Naive thymus-derived CD4-positive, alpha-beta T cell (primary cell): ENCODE measurements at regions of chr16 and their contacts with region 1.

Region 1: DNA sequence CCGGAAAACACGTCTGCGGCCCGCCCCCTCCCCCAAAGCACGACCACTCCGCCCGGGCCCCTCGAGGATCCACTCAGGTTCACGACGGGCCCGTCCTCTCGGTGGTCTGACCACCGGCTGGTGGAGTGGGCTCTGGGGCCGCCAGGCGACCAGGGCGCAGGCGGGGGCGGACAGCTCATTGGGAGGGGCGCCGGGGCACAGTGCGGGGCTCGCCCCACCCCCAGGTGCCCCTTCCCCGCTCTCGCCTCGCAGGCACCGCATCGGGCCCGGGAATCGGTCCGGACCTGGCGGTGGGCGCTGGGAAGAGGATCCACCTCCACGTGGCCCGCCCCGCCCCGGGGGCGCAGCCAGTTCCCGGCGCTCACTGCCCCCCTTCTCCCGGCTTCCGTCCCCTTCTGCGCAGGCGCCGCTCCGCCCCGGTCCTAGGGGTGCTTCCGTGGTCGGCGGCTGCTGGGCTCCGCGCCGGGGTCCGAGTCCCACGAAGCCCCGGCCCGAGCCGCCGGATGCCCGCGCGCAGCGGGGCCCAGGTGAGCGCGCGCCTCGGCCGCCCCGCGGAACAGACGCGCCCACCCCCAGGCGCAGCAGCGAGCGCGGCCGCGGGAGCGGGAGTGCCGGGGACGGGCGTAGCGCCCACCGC is at the start of gene MPG:
- DNase-seq: peak; percentile 67 to 94 (median 77)
- ATAC-seq: peak; percentile 89
- H3K4me3 ChIP-seq: peak within 1 kb of the TSS; percentile 84
- H3K4me3 Mint-ChIP-seq: peak within 1 kb of the TSS; percentile 84 to 93 (median 90)
- H3K27ac ChIP-seq: peak within 1 kb of the TSS; percentile 71
- H3K27ac Mint-ChIP-seq: peak within 1 kb of the TSS; percentile 62 to 89 (median 84)
- H3K4me1 ChIP-seq: peaks cover 14 to 15% of the 10 kb centered on the region in 2 donors
- H3K4me1 Mint-ChIP-seq: peaks cover 11 to 42% (median 30%) of the 10 kb centered on the region in 7 donors
- H3K27me3 ChIP-seq: no peaks in the 10 kb centered on the region
- H3K27me3 Mint-ChIP-seq: peaks cover 8 to 21% (median 11%) of the 10 kb centered on the region in 5 donors
- total RNA-seq, gene MPG: 17.5 to 59.5 (median 25.4) TPM

Region 2: GRCh38 chr16:53346-54236 is 24.3 kb before region 1 on chr16 and contains the starts of genes POLR3K and SNRNP25:
- CTCF ChIA-PET with region 1: no interaction called
- POLR2A ChIA-PET with region 1: no interaction called
- intact Hi-C with region 1: loop called (anchors 1 kb)
- DNase-seq: peak; percentile 90 to 98 (median 96)
- ATAC-seq: peak; percentile 98
- H3K4me3 ChIP-seq: peak within 1 kb of the TSS; percentile 96
- H3K4me3 Mint-ChIP-seq: peak within 1 kb of the TSS; percentile 89 to 100 (median 98)
- H3K27ac ChIP-seq: peak within 1 kb of the TSS; percentile 73
- H3K27ac Mint-ChIP-seq: peak within 1 kb of the TSS; percentile 66 to 95 (median 92)
- H3K4me1 ChIP-seq: peaks cover 9 to 11% of the 10 kb centered on the region in 2 donors
- H3K4me1 Mint-ChIP-seq: peaks cover 22 to 45% (median 36%) of the 10 kb centered on the region in 7 donors
- H3K27me3 ChIP-seq: no peaks in the 10 kb centered on the region
- H3K27me3 Mint-ChIP-seq: no peaks in the 10 kb centered on the region
- total RNA-seq, gene POLR3K: 8.5 to 45.4 (median 18.9) TPM
- total RNA-seq, gene SNRNP25: 9.8 to 57.4 (median 11.7) TPM

Region 3: DNA sequence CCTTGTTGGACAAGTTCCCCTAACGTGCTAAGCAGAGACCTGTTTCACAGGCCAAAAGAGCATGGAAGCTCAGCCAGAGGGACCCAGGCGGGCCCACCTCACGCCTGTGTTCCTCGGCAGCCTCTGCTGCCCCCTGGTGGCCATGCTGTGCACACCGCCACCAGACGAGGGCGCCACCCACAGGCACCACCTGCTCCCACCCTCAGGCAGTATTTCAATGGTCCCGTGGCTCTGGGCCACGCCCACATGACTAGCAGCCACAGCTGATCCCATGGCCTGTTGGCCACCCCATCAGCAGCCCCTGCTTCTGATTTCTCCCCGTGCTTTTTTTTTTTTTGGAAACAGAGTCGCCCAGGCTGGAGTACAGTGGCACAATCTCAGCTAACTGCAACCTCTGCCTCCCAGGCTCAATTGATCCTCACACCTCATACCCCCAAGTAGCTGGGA is 19.0 kb after region 1 on chr16:
- CTCF ChIA-PET with region 1: interaction called, 5 read pairs
- POLR2A ChIA-PET with region 1: interaction called, 5 read pairs
- intact Hi-C with region 1: loop called in 1 of 2 experiments (anchors 2 kb)
- DNase-seq: peak; percentile 80 to 92 (median 89)
- ATAC-seq: peak; percentile 100
- H3K4me3 ChIP-seq: no peak overlapping the region
- H3K4me3 Mint-ChIP-seq: no peak overlapping the region
- H3K27ac ChIP-seq: no peak overlapping the region
- H3K27ac Mint-ChIP-seq: peak overlapping the region in 2 of 9 donors; percentile 38 to 53
- H3K4me1 ChIP-seq: no peaks in the 10 kb centered on the region
- H3K4me1 Mint-ChIP-seq: peaks cover 0 to 10% (median 4%) of the 10 kb centered on the region in 7 donors
- H3K27me3 ChIP-seq: no peaks in the 10 kb centered on the region
- H3K27me3 Mint-ChIP-seq: no peaks in the 10 kb centered on the region

Region 4: DNA sequence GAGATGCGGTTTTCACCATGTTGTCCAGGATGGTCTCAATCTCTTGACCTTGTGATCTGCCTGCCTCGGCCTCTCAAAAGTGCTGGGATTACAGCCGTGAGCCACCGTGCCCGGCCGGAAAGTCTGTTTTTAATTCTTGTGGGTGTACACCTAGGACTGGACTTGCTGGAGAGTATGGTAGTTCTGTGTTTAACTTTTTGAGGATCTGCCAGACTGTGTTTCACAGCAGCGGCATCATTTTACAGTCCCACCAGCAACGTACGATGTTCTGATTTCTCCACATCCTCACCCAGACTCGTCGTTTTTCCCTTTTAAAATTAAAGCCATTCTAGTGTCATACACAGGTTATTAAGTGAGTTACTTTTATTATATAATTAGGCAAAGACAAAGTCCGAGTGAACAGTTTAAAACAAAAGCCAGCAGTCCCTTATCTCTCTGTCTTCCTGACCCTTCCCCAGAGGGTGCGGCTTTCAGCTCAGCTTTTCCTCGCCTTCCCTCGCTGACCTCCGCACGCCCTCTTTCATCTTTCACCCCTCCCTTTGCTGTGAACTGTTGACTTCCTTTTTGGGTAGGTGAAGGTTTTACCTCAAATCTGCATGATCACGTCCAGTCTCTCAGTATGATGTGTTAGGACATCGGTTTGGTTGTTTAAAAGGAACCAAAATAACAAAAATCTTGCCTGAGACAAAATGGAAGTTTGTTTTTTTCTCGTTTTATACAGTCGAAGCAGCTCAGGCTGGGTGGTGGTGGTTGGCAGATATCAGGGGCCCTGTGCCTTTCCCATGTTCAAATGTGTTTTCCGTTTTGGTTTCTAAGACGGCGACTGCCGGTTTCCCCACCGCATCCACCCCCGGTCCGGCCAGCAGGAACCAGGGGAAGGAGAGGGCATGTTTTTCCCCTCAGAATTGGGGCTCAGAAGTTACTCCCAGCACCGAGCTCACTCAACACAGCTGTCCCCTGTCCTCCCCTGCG is 174.7 kb after region 1 on chr16:
- CTCF ChIA-PET with region 1: no interaction called
- POLR2A ChIA-PET with region 1: no interaction called
- intact Hi-C with region 1: no loop called
- DNase-seq: peak in 7 of 9 donors; percentile 13 to 56 (median 27)
- ATAC-seq: peak; percentile 61
- H3K4me3 ChIP-seq: peak overlapping the region; percentile 60
- H3K4me3 Mint-ChIP-seq: peak overlapping the region; percentile 81 to 93 (median 86)
- H3K27ac ChIP-seq: peak overlapping the region; percentile 72
- H3K27ac Mint-ChIP-seq: peak overlapping the region; percentile 83 to 98 (median 94)
- H3K4me1 ChIP-seq: peaks cover 9 to 20% of the 10 kb centered on the region in 2 donors
- H3K4me1 Mint-ChIP-seq: peaks cover 12 to 44% (median 28%) of the 10 kb centered on the region in 7 donors
- H3K27me3 ChIP-seq: no peaks in the 10 kb centered on the region
- H3K27me3 Mint-ChIP-seq: no peaks in the 10 kb centered on the region

Region 5: GRCh38 chr16:457732-458400 is 379.9 kb after region 1 on chr16:
- CTCF ChIA-PET with region 1: no interaction called
- POLR2A ChIA-PET with region 1: no interaction called
- intact Hi-C with region 1: no loop called
- DNase-seq: no peak
- ATAC-seq: no peak
- H3K4me3 ChIP-seq: no peak overlapping the region
- H3K4me3 Mint-ChIP-seq: no peak overlapping the region
- H3K27ac ChIP-seq: no peak overlapping the region
- H3K27ac Mint-ChIP-seq: peak overlapping the region in 1 of 9 donors; percentile 8
- H3K4me1 ChIP-seq: no peaks in the 10 kb centered on the region
- H3K4me1 Mint-ChIP-seq: peaks cover 0 to 18% (median 7%) of the 10 kb centered on the region in 7 donors
- H3K27me3 ChIP-seq: no peaks in the 10 kb centered on the region
- H3K27me3 Mint-ChIP-seq: no peaks in the 10 kb centered on the region